ENCODE measurements at regions of chr15 and their contacts with region 1.

Region 1: GRCh38 chr15:68229386-68230156 is at the start of gene CLN6:
- DNase-seq: peak; percentile 90
- ATAC-seq: peak; percentile 88
- H3K4me3 Mint-ChIP-seq: peak within 1 kb of the TSS; percentile 93
- H3K27ac Mint-ChIP-seq: peak within 1 kb of the TSS; percentile 79
- H3K4me1 Mint-ChIP-seq: peaks cover 39% of the 10 kb centered on the region
- H3K27me3 Mint-ChIP-seq: peaks cover 5% of the 10 kb centered on the region
- total RNA-seq, gene CLN6: 60.2 to 64.6 TPM

Region 2: GRCh38 chr15:68017191-68017590 is 212.4 kb before region 1 on chr15:
- CTCF ChIA-PET with region 1: no interaction called
- DNase-seq: no peak
- ATAC-seq: no peak
- H3K4me3 Mint-ChIP-seq: no peak overlapping the region
- H3K27ac Mint-ChIP-seq: no peak overlapping the region
- H3K4me1 Mint-ChIP-seq: no peaks in the 10 kb centered on the region
- H3K27me3 Mint-ChIP-seq: peaks cover 10% of the 10 kb centered on the region

Region 3: DNA sequence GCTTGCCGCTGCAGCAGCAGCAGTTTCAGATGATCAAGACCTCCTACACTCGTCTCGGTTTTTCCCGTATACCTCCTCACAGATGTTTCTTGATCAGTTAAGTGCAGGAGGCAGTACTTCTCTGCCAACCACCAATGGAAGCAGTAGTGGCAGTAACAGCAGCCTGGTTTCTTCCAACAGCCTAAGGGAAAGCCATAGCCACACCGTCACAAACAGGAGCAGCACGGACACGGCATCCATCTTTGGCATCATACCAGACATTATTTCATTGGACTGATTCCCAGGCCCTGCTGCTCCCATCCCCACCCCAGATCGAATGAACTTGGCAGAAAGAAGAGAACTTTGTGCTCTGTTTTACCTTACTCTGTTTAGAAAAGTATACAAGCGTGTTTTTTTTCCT is 42.0 kb before region 1 on chr15:
- CTCF ChIA-PET with region 1: no interaction called
- DNase-seq: no peak
- ATAC-seq: no peak
- H3K4me3 Mint-ChIP-seq: no peak overlapping the region
- H3K27ac Mint-ChIP-seq: no peak overlapping the region
- H3K4me1 Mint-ChIP-seq: peaks cover 6% of the 10 kb centered on the region
- H3K27me3 Mint-ChIP-seq: no peaks in the 10 kb centered on the region

Region 4: DNA sequence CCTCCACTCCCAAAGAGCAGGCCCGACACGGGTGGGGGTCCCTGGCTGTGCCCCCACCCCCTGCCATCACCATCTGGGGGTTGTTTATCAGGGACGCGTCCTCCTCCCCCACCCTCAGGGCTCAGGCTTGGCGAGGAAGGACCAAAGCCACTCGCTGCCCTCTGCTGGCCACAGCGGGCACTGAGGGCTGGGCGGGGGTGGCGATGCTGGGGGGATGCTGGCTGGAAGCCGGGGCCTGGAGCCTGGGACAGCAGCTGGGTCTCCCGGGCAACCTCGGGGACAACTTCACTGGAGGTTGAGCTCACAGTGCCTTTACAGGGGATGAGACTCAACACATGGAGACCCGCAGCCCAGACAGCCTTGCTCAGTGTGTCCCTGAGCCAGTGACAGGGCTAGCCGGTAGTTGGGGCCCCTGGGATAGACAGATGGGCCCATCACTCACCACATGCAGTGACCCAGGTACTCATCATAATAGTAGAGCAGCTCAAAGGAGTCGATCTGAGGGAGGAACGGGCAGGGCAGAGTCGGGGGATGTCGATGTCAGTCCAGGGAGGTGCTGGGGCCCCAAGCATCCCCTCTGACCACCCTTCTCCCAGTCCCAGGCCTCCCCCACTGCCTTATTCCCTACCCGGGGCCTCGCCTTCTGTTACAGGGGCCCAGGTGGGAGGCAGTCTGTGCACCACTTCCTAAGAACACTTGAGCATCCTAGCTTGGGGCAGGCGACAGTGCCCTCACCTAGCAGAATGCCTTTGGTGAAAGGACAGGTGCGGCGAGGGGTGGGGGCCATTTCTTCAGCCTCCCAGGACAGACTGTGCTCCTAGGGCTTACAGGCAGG is 18.5 kb before region 1 on chr15:
- CTCF ChIA-PET with region 1: interaction called, 18 read pairs
- DNase-seq: peak; percentile 60
- ATAC-seq: peak; percentile 50
- H3K4me3 Mint-ChIP-seq: no peak overlapping the region
- H3K27ac Mint-ChIP-seq: no peak overlapping the region
- H3K4me1 Mint-ChIP-seq: peaks cover 23% of the 10 kb centered on the region
- H3K27me3 Mint-ChIP-seq: no peaks in the 10 kb centered on the region

Region 5: DNA sequence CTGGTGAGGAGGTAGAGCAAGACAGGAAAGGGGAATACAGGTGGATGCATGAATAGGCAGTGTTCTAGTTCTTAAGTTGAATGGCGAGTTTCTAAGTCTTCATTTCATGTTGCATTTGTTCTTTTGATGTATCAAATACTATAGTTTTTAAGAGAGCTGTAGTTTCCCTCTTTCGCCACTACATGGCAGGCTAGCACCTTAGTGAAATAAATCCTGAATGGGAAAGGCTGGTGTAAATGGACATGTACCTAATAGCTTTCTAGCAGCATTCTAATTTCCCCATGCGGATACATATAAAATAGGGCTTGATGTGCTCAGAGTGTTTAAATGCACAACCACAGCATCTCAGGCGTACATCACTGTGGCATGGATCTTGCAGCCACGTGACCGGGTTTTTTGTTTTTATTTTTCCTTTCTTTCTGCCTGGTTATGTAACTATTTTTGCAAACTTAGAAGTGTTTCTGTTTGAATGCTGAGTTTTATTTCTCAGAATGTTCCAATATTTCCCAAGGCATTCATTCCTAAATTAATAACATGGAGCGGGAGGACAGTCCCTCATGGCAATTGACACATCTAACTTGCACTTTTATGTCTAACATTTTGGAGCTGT is 23.5 kb after region 1 on chr15:
- CTCF ChIA-PET with region 1: interaction called, 12 read pairs
- DNase-seq: no peak
- ATAC-seq: peak; percentile 78
- H3K4me3 Mint-ChIP-seq: no peak overlapping the region
- H3K27ac Mint-ChIP-seq: no peak overlapping the region
- H3K4me1 Mint-ChIP-seq: peaks cover 2% of the 10 kb centered on the region
- H3K27me3 Mint-ChIP-seq: peaks cover 40% of the 10 kb centered on the region

Region 6: GRCh38 chr15:70097337-70098169 is 1868.0 kb after region 1 on chr15 and contains the start of gene TLE3:
- CTCF ChIA-PET with region 1: no interaction called
- DNase-seq: peak; percentile 98
- ATAC-seq: peak; percentile 74
- H3K4me3 Mint-ChIP-seq: peak within 1 kb of the TSS; percentile 95
- H3K27ac Mint-ChIP-seq: peak within 1 kb of the TSS; percentile 97
- H3K4me1 Mint-ChIP-seq: peaks cover 56% of the 10 kb centered on the region
- H3K27me3 Mint-ChIP-seq: peaks cover 22% of the 10 kb centered on the region
- total RNA-seq, gene TLE3: 48.8 to 53.5 TPM

Measured in activated CD8-positive, alpha-beta memory T cell treated with anti-CD3 and anti-CD28 coated beads, Interleukin-2, amount 10 ng/mL, durations not matched to agents 7 days and 5 days (primary cell).